ENCODE measurements at regions of chr15 and their contacts with region 1.

Region 1: DNA sequence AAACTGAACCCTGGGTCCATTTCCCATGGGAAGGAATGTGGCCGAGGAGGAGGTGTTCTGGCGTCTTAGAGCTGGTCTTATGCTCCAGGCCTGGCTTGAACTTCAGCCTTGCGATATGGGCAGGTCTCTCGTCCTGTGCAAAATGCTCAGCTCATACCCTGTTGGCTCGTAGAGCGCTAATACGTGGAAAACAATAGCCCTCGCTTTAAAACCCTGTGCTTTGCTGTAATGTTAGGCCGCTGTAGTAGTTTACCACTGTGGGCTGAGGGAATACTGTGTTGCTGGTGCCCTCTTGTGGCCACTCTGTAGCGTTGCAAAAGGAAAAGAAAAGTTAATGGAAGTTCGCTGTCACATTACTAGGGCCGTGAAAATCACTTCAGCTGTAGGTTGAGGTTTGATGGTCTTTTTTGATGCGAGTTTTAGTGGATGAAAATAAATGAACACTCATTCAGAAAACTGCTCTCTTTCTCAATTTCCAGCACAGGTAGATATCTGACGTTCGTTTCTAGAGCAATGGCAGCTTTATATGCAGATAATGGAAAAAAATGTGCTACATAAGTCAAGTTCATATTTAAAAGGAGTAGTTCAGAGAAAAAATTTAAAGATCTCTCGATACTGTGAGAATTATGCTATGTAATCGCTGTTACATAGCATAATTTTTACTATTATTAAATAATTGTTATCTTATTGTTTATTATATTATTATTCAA is 92.9 kb downstream of the MCTP2 start:
- DNase-seq: peak; percentile 35
- H3K4me3 ChIP-seq: no peak overlapping the region
- H3K27ac ChIP-seq: no peak overlapping the region
- H3K4me1 ChIP-seq: no peaks in the 10 kb centered on the region
- H3K27me3 ChIP-seq: no peaks in the 10 kb centered on the region
- CTCF ChIP-seq: peak; percentile 93 to 97

Region 2: GRCh38 chr15:94163999-94164807 is 160.1 kb before region 1 on chr15:
- CTCF ChIA-PET with region 1: interaction called, 21 read pairs
- dilution Hi-C with region 1: loop called (anchors 5 kb)
- in situ Hi-C with region 1: loop called (anchors 5 kb)
- intact Hi-C with region 1: loop called (anchors 1 kb)
- DNase-seq: peak; percentile 59
- H3K4me3 ChIP-seq: no peak overlapping the region
- H3K27ac ChIP-seq: no peak overlapping the region
- H3K4me1 ChIP-seq: no peaks in the 10 kb centered on the region
- H3K27me3 ChIP-seq: no peaks in the 10 kb centered on the region
- CTCF ChIP-seq: peak; percentile 81 to 84

Measured in mammary epithelial cell (primary cell).